AG04449 (cell line): ENCODE measurements at regions of chr7 and their contacts with region 1.

Region 1: DNA sequence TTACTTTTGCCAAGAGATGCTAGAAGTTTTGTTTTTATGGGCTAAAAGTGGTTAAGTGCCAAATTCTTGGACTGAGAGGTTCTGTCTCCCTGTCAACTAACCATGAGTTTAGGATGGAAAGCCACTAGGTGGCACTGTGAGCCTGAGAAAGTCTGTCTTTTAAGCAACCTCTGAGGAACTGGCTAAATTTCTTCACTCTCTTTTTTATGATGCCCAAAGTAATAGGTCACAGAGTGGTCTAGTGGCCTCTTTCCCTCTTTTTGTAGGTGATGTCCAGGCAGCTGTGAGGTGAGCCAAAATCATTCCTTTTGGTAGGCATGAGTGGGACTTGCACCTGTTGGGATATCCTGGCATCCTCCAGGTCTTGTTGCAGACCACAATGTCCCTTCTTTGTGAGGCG is 56.8 kb downstream of the SND1 start:
- DNase-seq: peak; percentile 53
- H3K4me3 ChIP-seq: no peak overlapping the region
- CTCF ChIP-seq: peak; percentile 69

Region 2: DNA sequence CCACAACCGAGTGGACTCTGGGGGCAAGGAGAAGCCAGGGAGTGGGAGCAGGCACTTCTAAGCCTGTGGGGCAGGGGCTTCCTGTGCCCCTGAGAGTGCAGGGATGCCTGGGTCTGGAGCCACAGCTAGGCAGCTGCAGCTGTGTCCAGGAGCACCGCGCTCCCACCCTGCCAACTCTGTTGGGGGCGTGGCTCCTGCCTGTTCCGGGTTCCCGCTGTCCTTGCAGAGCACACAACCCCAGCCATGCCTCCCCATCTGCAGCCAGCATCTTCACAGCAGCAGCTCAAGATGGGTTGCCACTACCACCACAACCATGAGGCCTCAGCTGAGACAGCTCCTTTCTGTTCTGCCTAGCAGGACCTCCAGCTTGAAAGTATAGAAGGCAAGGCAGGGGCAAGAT is 99.5 kb before region 1 on chr7:
- CTCF ChIA-PET with region 1: no interaction called
- POLR2A ChIA-PET with region 1: no interaction called
- DNase-seq: no peak
- H3K4me3 ChIP-seq: no peak overlapping the region
- CTCF ChIP-seq: no peak

Region 3: DNA sequence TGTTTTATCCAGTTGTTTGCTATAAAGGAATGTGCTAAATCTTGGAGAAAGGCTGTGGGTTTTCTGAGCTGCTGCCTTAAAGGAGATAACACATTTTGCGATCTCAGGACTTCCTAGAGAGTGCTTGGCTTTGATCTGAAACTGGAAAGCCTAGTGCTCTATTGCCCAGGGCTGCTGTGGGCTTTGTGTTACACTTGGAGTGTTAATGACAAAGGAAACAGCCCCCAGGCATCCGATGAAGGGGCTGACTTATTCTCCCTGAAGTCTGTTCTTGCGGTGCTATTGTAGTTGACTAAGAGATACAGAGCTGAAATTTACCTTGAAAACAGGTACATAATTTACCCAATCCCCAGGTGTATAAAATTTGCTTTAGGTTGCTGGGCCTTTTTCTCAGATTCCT is 17.7 kb after region 1 on chr7:
- CTCF ChIA-PET with region 1: interaction called, 41 read pairs
- POLR2A ChIA-PET with region 1: no interaction called
- DNase-seq: no peak
- H3K4me3 ChIP-seq: no peak overlapping the region
- CTCF ChIP-seq: no peak

Region 4: GRCh38 chr7:128031901-128032604 is 323.3 kb after region 1 on chr7:
- CTCF ChIA-PET with region 1: interaction called, 22 read pairs
- POLR2A ChIA-PET with region 1: no interaction called
- DNase-seq: peak; percentile 65
- H3K4me3 ChIP-seq: peak overlapping the region; percentile 53
- CTCF ChIP-seq: peak; percentile 43

Region 5: GRCh38 chr7:128091106-128091505 is 382.3 kb after region 1 on chr7:
- CTCF ChIA-PET with region 1: interaction called, 11 read pairs
- POLR2A ChIA-PET with region 1: no interaction called
- DNase-seq: no peak
- H3K4me3 ChIP-seq: no peak overlapping the region
- CTCF ChIP-seq: no peak